HCT116 (cell line): ENCODE measurements at regions of chr20 and their contacts with region 1.

Region 1: GRCh38 chr20:46132705-46133120 is 14.6 kb downstream of the CD40 start:
- DNase-seq: peak; percentile 21
- ATAC-seq: peak; percentile 95
- H3K4me3 ChIP-seq: no peak overlapping the region
- H3K27ac ChIP-seq: no peak overlapping the region
- H3K4me1 ChIP-seq: no peaks in the 10 kb centered on the region
- H3K27me3 ChIP-seq: 0 out of 2 replicates have a peak, but pooled peaks cover 12% of the 10 kb centered on the region
- CTCF ChIP-seq: peak; percentile 86 to 88 (median 87)
- POLR2A ChIP-seq: no peak
- RAD21 ChIP-seq: peak; percentile 93

Region 2: DNA sequence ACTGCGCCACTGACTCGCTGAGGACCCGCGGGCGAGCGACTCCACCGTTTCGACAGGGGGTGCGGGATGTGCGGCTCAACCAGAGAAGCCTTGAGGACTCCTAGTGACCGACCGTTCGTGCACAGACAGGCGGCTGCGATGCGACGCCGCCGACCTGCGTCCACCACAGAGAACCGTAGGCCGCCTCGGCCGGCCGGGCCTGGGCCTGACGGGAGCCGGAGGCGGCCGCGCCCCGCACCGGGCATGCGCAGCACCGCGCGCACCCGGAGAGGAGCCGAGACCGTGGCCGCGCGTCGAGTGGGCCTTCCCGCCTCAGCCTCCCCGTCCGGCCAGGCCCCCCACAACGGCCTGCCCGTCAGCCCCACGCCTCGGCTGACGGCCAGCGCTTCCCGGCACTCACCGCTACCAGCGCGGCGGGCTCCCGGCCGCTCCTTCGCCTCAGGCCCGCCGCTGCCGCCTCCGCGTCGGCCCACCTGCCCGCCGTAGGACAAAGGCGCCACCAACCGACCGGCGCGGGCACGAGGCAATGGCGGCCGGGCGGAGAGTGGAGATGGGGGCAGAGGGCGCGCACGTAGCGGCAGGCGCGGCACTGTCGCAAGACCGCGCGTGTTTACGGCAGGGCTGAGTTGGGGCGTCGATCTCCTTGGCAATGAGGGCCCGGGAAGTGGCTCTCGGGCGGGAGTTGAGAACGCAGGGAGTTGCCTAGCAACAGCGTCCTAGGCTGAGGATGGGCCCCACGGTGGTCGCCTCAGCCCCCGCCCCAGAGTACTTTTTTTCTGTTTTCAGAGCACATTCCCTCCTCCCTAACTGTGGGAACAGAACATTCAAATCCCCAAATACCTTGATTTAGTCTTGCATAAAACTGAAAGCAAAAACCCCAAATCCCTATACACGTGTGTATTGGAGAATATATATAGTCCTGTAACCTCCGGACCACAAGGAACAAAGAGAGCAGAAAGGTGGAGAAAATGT is 43.0 kb before region 1 on chr20 and contains the start of gene NCOA5:
- CTCF ChIA-PET with region 1: no interaction called
- POLR2A ChIA-PET with region 1: no interaction called
- RAD21 ChIA-PET with region 1: no interaction called
- intact Hi-C with region 1: no loop called
- DNase-seq: peak; percentile 88
- ATAC-seq: peak; percentile 89
- H3K4me3 ChIP-seq: peak within 1 kb of the TSS; percentile 84 to 93
- H3K27ac ChIP-seq: peak within 1 kb of the TSS; percentile 95
- H3K4me1 ChIP-seq: peaks cover 24 to 47% of the 10 kb centered on the region in 2 experiments
- H3K27me3 ChIP-seq: no peaks in the 10 kb centered on the region
- CTCF ChIP-seq: no peak
- POLR2A ChIP-seq: peak; percentile 89
- RAD21 ChIP-seq: peak; percentile 32; the same call in 1 of the 2 replicates
- total RNA-seq, gene NCOA5: 31.6 TPM

Region 3: GRCh38 chr20:46108435-46108841 is 24.3 kb before region 1 on chr20:
- CTCF ChIA-PET with region 1: no interaction called
- POLR2A ChIA-PET with region 1: no interaction called
- RAD21 ChIA-PET with region 1: no interaction called
- intact Hi-C with region 1: no loop called
- DNase-seq: no peak
- ATAC-seq: no peak
- H3K4me3 ChIP-seq: no peak overlapping the region
- H3K27ac ChIP-seq: no peak overlapping the region
- H3K4me1 ChIP-seq: no peaks in the 10 kb centered on the region
- H3K27me3 ChIP-seq: peaks cover 17% of the 10 kb centered on the region; the same call in 1 of the 2 replicates
- CTCF ChIP-seq: no peak
- POLR2A ChIP-seq: no peak
- RAD21 ChIP-seq: no peak

Region 4: DNA sequence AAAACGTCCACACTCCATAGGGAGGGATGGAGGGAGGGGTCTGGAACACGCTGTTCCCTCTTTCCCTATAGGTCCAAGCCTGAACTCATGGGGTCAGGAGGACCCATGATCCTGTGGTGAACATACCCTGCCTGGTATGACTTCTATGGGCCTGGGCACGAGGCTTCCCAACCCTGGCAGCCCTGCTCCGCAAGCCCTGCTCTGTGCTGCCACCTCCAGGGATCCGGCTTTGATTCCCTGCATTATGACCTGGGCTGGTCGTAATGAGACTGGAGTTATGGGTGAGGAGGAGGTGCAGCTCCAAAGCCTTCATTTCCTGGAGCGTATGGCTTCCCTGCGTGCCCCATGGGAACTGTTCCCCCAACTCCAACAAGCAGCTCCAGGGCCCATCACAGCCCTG is 120.7 kb after region 1 on chr20:
- CTCF ChIA-PET with region 1: no interaction called
- POLR2A ChIA-PET with region 1: no interaction called
- RAD21 ChIA-PET with region 1: interaction called, 4 to 6 read pairs
- intact Hi-C with region 1: loop called (anchors 1 kb)
- DNase-seq: peak; percentile 26
- ATAC-seq: peak; percentile 81
- H3K4me3 ChIP-seq: no peak overlapping the region
- H3K27ac ChIP-seq: no peak overlapping the region
- H3K4me1 ChIP-seq: peaks cover 26 to 31% of the 10 kb centered on the region in 2 experiments
- H3K27me3 ChIP-seq: no peaks in the 10 kb centered on the region
- CTCF ChIP-seq: peak; percentile 45 to 71 (median 52); a peak in 5 of 6 replicates
- POLR2A ChIP-seq: no peak
- RAD21 ChIP-seq: peak; percentile 76

Region 5: DNA sequence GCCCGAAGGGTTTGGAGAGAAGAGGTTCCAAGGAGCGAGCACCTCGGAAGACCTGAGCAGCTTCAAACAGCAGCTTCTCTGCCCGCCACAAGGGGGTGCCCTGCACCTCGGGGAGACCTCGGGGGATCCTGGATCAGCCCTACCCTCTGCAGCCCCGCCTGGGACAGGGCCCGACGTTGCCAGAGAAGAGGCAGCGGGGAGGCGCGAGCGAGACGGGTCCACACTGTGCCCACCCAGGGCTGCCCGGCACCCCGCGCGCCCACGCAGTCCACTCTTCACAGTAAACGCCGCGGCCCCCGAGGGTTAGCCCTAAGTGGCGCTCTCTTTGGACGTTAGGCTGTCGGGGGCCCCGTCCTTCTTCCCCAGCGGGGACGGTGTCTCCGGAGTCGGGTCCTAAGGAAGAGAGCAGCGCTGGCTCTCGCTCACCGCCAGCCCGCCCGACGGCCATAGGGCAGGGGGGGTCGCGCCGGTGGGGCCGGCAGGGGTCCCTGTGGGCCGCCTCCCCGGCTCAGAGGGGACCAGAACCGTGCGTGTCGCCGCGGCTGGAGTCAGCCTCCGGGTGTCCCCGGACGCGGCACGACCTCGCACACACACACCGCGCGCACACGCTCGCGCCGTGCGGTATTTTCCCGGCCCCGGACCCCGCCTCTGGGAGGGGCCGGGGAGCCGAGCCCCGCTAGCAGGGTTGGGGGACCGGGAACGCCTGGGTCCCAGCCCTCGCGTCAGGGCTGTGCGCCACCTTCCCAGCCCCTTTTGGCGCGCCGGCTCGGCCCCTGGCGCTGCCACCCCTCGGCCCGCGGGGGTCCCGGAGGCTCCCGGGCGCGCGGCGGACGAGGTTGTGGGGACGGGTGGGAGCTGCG is 174.7 kb after region 1 on chr20:
- CTCF ChIA-PET with region 1: interaction called, 11 read pairs
- POLR2A ChIA-PET with region 1: no interaction called
- RAD21 ChIA-PET with region 1: interaction called in 1 of 2 experiments, 9 read pairs
- intact Hi-C with region 1: loop called (anchors 5 kb)
- DNase-seq: no peak
- ATAC-seq: peak; percentile 76
- H3K4me3 ChIP-seq: peak overlapping the region; percentile 38 to 57
- H3K27ac ChIP-seq: no peak overlapping the region; the same call in 1 of the 2 replicates
- H3K4me1 ChIP-seq: peaks cover 7 to 23% of the 10 kb centered on the region in 2 experiments; a peak in 3 of 4 replicates
- H3K27me3 ChIP-seq: peaks cover 9% of the 10 kb centered on the region; the same call in 1 of the 2 replicates
- CTCF ChIP-seq: peak; percentile 73 to 96 (median 90)
- POLR2A ChIP-seq: no peak
- RAD21 ChIP-seq: peak; percentile 69

Region 6: DNA sequence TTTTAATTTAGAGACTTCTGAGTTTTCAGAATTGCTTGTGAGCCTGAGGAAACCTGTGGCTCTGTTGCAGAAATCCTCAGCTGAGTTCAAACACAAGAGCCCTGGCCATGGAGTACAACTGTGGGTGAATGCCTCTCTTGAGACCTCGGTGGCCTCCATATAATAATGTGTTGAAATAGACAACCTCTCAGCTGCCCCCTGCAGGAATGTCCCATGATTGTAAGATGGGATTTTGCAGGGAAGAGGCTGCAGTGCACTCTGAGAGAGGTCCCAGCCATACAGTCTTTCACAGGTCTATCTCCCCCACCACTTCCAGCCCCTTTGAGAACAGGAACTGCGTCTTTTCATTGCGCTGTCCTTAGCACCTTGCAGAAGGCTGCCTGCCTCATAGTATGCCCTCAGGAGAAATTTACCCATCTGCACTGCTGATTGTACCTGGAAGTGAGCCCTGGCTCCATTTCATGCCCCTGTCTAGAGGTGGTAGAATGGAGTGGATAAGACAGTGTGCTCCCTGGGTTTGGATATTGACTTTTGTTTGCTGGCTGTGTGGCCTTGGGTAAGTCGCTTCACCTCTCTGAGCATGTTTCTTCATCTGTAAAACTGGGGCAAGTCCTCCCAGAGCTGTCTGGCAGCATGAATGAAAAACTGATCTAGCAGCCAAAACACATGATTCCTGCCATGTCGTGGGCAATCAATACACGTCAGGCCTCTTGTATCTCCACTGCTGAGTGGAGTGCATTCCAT is 192.4 kb after region 1 on chr20:
- CTCF ChIA-PET with region 1: interaction called, 3 read pairs
- POLR2A ChIA-PET with region 1: no interaction called
- RAD21 ChIA-PET with region 1: no interaction called
- intact Hi-C with region 1: loop called (anchors 1 kb)
- DNase-seq: no peak
- ATAC-seq: peak; percentile 97
- H3K4me3 ChIP-seq: no peak overlapping the region
- H3K27ac ChIP-seq: no peak overlapping the region
- H3K4me1 ChIP-seq: no peaks in the 10 kb centered on the region
- H3K27me3 ChIP-seq: no peaks in the 10 kb centered on the region; the same call in 1 of the 2 replicates
- CTCF ChIP-seq: peak; percentile 43 to 58 (median 56); a peak in 5 of 6 replicates
- POLR2A ChIP-seq: no peak
- RAD21 ChIP-seq: peak; percentile 56

Region 7: DNA sequence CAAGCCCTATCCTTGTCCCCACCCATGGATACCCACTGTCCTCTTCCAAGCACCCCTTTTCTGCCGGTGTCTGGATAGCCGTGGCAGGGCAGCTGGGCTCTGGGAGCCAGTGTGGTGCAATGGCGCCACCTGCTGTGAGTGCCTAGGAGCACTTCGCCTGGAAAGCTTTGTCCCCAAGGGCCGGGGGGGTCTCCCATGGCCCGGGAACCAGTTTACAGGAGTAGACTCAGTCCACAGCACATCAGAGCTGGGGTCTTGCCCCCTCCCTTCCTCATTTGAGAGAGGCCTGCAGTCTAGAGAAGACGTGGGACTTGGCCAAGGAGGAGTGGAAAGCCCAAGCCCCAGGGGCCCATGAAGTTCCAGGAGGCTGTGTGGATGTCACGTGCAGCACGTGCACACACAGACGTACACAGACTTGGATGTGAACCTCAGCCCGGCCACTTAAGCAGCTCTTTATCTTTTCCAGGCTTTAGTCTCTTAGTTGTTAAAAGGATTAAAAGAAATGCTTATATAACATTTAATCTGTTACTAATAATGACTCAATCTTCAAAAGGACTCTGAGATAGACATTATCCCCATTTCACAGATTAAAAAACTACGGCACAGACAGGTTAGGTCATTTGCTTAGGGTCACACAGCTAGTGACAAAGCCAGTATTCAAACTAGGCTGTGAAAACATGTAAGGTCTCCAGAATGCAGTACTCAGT is 216.5 kb after region 1 on chr20:
- CTCF ChIA-PET with region 1: interaction called, 9 read pairs
- POLR2A ChIA-PET with region 1: no interaction called
- RAD21 ChIA-PET with region 1: interaction called, 4 read pairs
- intact Hi-C with region 1: loop called (anchors 1 kb)
- DNase-seq: peak; percentile 13
- ATAC-seq: peak; percentile 81
- H3K4me3 ChIP-seq: no peak overlapping the region
- H3K27ac ChIP-seq: no peak overlapping the region
- H3K4me1 ChIP-seq: 0 out of 4 replicates have a peak, but pooled peaks cover 0 to 3% of the 10 kb centered on the region in 2 experiments
- H3K27me3 ChIP-seq: no peaks in the 10 kb centered on the region
- CTCF ChIP-seq: peak; percentile 66 to 84 (median 79)
- POLR2A ChIP-seq: no peak
- RAD21 ChIP-seq: peak; percentile 84

Region 8: DNA sequence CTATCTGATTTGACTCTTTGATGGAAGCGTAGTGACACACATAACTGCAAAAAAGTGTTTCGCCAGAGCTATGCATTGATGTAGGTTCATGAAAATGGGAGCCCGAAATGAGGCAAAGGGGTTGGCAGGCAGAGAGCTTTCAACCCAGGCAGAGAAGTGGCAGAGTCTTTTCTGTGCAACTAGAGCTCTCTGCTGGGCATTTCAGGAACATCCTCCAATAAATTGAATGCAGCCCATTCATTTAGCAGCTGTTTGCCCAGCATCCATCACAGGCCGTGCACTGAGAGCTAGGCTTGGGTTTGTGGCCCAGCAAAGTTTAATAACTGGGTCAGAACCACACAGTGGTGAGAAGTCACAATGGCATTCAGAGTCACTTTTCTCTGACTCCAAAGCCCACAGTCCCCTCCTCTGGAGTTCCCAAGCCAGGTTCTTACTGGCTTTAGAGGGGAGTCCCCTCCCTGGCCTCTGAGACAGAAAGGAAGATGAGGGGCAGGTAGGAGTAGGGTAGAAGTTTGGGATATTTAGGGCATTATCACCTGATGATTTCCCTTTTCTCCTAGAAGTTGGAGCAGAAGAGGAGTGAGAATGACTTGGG is 305.5 kb after region 1 on chr20:
- CTCF ChIA-PET with region 1: interaction called, 17 read pairs
- POLR2A ChIA-PET with region 1: no interaction called
- RAD21 ChIA-PET with region 1: interaction called in 1 of 2 experiments, 4 read pairs
- intact Hi-C with region 1: loop called (anchors 1 kb)
- DNase-seq: peak; percentile 21
- ATAC-seq: peak; percentile 84
- H3K4me3 ChIP-seq: no peak overlapping the region
- H3K27ac ChIP-seq: no peak overlapping the region
- H3K4me1 ChIP-seq: peaks cover 0 to 4% of the 10 kb centered on the region in 2 experiments; a peak in 1 of 4 replicates
- H3K27me3 ChIP-seq: peaks cover 20% of the 10 kb centered on the region; the same call in 1 of the 2 replicates
- CTCF ChIP-seq: peak; percentile 32 to 45 (median 36); a peak in 5 of 6 replicates
- POLR2A ChIP-seq: no peak
- RAD21 ChIP-seq: peak; percentile 67

Region 9: DNA sequence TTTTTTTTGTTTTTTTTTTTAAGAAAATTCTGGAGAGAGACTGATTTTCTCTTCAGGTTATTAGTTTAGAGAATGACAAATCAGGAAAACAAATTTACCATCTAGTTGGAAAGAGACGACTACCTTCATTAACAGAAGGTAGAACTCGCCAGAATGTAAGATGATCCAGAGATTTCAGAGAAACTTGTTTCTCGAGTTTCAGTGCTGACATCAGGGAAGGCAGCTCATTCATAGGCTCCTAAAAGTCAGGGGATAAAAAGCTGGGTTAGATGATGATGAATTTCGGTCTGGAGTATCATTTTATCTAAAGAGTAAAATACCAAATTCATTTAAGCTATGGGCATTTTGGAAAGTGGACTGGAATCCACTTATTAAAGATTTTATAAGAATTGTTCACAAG is 352.7 kb after region 1 on chr20:
- CTCF ChIA-PET with region 1: interaction called, 5 read pairs
- POLR2A ChIA-PET with region 1: no interaction called
- RAD21 ChIA-PET with region 1: no interaction called
- intact Hi-C with region 1: loop called (anchors 1 kb)
- DNase-seq: no peak
- ATAC-seq: no peak
- H3K4me3 ChIP-seq: no peak overlapping the region
- H3K27ac ChIP-seq: no peak overlapping the region
- H3K4me1 ChIP-seq: no peaks in the 10 kb centered on the region
- H3K27me3 ChIP-seq: peaks cover 61% of the 10 kb centered on the region
- CTCF ChIP-seq: no peak
- POLR2A ChIP-seq: no peak
- RAD21 ChIP-seq: no peak

Region 10: DNA sequence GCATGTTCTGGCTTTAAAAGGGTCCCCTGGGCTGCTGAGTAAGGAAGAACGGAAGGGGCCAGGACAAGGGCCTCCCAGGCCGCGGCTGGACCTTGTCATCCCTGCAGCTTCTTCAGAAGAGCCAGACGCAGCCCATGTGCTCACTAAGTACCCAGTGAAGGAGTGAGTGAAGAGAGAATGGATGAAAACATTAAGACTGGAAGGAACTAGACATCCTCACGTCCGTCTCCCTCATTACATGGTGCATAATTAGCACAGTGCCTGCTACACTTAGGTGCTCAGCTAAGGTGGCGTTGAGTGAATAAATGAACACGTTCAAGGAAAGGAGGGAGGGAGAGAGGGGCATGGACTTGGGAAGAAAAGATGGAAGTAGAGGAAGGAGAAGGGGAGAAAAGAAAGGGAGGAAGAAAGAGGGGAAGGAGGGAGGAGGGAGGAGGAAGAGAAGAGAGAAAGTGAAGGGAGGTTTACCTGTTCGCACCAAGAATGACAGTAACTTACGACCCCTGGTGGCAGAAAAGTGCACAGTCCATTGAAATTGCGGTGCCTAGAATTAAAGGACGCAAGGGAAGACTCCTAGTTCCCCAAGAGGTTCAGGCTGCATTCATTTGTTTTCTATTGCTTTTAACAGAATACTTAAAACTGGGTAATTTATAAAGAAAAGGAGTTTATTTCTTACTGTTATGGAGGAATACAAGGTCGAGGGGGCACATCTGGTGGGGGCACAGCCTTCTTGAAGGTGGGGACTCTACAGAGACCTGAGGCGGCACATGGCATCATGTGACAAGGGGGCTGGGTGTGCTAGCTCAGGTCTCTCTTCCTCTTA is 548.5 kb after region 1 on chr20:
- CTCF ChIA-PET with region 1: no interaction called
- POLR2A ChIA-PET with region 1: no interaction called
- RAD21 ChIA-PET with region 1: no interaction called
- intact Hi-C with region 1: no loop called
- DNase-seq: no peak
- ATAC-seq: peak; percentile 79
- H3K4me3 ChIP-seq: no peak overlapping the region
- H3K27ac ChIP-seq: no peak overlapping the region
- H3K4me1 ChIP-seq: peaks cover 0 to 10% of the 10 kb centered on the region in 2 experiments; a peak in 2 of 4 replicates
- H3K27me3 ChIP-seq: no peaks in the 10 kb centered on the region
- CTCF ChIP-seq: peak; percentile 60 to 84 (median 83); a peak in 5 of 6 replicates
- POLR2A ChIP-seq: no peak
- RAD21 ChIP-seq: peak; percentile 67